Right ventricle myocardium inferior (tissue), 1 donor: ENCODE measurements at regions of chr1 and their contacts with region 1.

Region 1: DNA sequence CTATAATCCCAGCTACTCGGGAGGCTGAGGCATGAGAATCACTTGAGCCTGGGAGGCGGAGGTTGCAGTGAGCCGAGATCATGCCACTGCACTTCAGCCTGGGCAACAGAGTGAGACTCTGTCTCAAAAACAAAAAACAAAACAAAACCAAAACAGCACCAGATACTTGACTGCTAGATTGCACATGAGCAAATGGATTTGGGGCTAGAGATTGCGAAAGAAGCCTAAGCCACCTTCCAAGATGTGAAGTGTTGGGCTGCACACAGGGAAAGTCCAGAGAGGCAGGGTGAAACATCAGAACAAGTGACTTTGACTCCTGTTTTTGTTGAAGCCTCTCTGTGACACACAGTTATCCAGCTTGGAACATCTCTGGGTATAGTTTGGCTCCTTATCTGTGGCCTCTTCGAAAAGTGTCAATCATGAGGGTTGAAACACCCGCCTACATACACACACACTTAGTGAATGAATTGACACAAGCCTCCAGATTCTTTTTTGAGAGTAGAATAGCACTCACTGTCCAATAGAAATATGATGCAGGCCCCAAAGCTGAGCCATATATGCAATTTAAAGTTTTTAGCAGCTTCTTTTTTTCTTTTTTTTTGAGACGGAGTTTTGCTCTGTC is 34.2 kb upstream of the GPR137B start:
- DNase-seq: no peak
- ATAC-seq: no peak

Region 2: DNA sequence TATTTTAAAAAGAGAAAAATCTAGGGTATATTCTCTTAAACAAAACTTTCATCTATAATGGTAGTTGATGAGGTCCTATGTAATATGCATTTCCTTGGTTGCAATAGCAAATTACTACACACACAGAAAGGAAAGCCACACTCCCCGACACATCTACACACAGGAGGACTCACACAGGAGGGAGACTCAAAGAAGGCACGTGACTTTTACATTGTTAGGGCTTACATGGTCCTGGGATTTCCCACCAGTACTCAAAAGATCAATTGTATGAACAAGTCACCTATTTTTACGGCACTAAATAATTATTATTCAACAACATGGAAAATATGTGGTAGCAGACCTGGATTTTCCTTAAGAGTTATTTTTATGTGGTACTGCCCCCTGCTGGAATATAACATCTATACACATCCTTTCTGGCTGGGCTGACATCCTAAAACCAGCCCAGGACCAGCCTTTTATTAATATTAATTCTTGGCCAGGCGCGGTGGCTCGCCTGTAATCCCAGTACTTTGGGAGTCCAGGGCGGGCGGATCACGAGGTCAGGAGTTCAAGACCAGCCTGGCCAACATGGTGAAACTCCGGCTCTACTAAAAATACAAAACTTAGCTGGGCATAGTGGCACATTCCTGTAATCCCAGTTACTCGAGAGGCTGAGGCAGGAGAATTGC is 381.7 kb after region 1 on chr1:
- intact Hi-C with region 1: loop called (anchors 1 kb)
- DNase-seq: no peak
- ATAC-seq: peak; percentile 38

Region 3: GRCh38 chr1:236534151-236534651 is 426.1 kb after region 1 on chr1:
- intact Hi-C with region 1: loop called (anchors 5 kb)
- DNase-seq: no peak
- ATAC-seq: no peak